ENCODE measurements at regions of chr14 and their contacts with region 1.

Region 1: DNA sequence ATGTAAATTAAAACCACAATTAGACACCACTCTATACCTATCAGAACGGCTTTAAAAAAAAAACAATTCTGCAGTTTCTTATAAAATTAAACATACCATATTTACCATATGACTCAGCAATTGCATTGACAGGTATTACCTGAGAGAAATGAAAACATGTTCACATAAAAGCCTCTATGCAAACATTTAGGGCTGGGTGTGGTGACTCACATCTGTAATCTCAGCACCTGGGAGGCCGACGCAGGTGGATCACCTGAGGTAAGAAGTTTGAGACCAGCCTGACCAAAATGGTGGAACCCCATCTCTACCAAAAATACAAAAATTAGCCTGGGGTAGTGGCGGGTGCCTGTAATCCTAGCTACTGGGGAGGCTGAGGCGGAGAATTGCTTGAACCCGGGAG is 41.0 kb downstream of the SPTB start:
- DNase-seq: peak in 1 of 5 donors; percentile 2
- H3K4me3 ChIP-seq: no peak overlapping the region
- H3K27ac ChIP-seq: no peak overlapping the region
- H3K4me1 ChIP-seq: no peaks in the 10 kb centered on the region
- H3K27me3 ChIP-seq: no peaks in the 10 kb centered on the region
- CTCF ChIP-seq: no peak

Region 2: DNA sequence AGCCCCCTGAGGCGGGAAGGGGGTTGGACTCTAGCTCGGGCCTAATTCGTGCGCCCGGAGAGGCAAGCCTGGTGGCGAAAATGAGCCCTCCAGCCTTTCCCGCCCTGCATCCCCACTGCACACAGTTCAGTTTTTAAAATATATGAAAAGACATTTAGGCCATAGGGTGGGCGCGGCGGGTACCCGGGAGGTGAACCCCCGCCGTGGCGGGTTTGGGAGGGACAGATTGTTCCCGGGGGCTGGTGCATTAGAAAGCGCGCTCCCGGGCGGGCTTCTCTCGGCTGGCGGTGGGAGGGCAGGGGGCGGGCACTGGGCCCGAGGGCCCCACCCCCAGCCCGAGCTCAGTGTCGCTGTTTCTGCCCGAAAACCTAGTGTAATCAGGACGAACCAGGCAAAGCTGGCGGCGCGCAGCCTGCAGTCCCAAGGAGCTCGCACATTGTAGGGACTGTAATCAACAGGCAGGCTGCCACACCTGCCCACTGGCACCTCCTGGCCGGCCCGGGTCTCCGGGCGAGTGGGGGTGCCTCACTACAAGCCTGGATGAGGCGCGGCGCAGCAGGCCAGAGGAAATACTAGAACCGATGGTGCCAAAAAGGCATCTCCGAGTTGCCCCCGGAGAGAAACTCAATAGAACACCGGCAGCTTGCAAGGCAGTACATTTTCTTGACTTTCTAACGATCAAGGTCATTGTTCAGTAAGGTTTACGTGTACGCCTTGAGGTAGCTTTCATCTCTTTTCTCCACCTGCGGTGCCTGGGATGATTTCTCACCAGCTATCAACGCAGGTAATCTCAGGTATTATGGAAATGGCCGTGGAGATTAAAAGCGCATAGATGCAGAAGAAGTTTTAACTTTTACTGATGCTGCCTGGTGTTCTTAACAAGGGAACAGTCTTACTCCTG is 41.8 kb after region 1 on chr14:
- intact Hi-C with region 1: loop called (anchors 10 kb)
- DNase-seq: peak; percentile 76 to 85 (median 84)
- H3K4me3 ChIP-seq: peak overlapping the region; percentile 43 to 67 (median 56)
- H3K27ac ChIP-seq: no peak overlapping the region
- H3K4me1 ChIP-seq: peaks cover 0 to 2% (median 0%) of the 10 kb centered on the region in 3 donors
- H3K27me3 ChIP-seq: peaks cover 5% of the 10 kb centered on the region
- CTCF ChIP-seq: no peak

Measured in kidney (tissue), 22 donors.